ENCODE measurements at regions of chr12 and their contacts with region 1.

Region 1: DNA sequence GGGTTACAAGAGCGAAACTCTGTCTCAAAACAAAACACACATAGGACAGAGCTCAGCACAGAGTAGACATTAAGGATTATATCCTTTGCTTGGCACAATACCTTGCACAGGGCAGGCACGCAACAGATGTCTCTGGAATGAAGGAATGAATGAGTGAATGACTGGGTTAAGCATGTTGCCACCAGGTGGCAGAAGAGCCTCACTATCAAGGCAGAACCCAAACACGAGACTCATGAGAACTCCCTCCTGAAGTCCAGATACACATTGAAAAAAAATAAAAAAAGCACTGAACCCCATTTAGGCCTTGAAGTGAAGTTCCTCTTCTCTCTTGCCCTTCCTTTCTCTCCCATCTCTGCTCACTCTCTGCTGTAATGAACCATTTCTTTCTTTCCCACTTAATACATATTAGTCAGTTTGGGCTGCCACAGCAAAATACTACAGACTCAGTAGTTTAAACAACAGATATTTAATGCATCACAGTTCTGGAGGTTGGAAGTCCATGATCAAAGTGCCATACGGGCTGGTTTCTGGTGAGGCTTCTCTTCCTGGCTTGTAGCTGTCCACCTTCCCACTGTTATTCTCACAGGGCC is 26.6 kb upstream of the LTA4H start:
- DNase-seq: peak; percentile 83
- H3K4me3 Mint-ChIP-seq: no peak overlapping the region
- H3K27ac Mint-ChIP-seq: no peak overlapping the region
- H3K4me1 Mint-ChIP-seq: peaks cover 26% of the 10 kb centered on the region
- H3K27me3 Mint-ChIP-seq: no peaks in the 10 kb centered on the region

Region 2: GRCh38 chr12:96132819-96133218 is 70.9 kb after region 1 on chr12:
- CTCF ChIA-PET with region 1: no interaction called
- POLR2A ChIA-PET with region 1: no interaction called
- intact Hi-C with region 1: loop called (anchors 2 kb)
- DNase-seq: peak; percentile 31
- H3K4me3 Mint-ChIP-seq: no peak overlapping the region
- H3K27ac Mint-ChIP-seq: no peak overlapping the region
- H3K4me1 Mint-ChIP-seq: peaks cover 22% of the 10 kb centered on the region
- H3K27me3 Mint-ChIP-seq: peaks cover 6% of the 10 kb centered on the region

Region 3: DNA sequence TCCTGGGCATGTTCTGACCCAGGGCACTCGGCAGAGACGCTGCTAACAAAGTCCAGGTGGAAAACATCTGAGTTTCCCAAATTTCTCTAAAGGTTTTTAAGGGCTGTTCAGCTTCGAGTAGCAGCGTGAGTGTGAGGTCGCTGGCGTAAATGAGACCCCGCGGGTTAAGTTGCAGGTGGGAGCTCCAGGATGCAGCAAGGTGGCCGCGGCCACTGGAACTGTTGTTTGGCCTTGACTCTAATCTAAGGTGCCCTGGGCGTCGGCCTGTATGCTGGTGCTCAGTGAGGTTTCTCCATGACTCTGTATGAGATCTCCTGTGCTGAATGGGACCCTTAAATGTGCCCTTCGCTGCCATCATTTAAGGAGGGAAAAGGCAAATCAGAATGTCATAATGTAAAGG is 182.9 kb after region 1 on chr12:
- CTCF ChIA-PET with region 1: no interaction called
- POLR2A ChIA-PET with region 1: no interaction called
- intact Hi-C with region 1: no loop called
- DNase-seq: no peak
- H3K4me3 Mint-ChIP-seq: no peak overlapping the region
- H3K27ac Mint-ChIP-seq: no peak overlapping the region
- H3K4me1 Mint-ChIP-seq: peaks cover 55% of the 10 kb centered on the region
- H3K27me3 Mint-ChIP-seq: no peaks in the 10 kb centered on the region

Region 4: GRCh38 chr12:96501139-96501761 is 439.3 kb after region 1 on chr12:
- CTCF ChIA-PET with region 1: interaction called, 3 read pairs
- POLR2A ChIA-PET with region 1: no interaction called
- intact Hi-C with region 1: loop called (anchors 5 kb)
- DNase-seq: peak; percentile 56
- H3K4me3 Mint-ChIP-seq: no peak overlapping the region
- H3K27ac Mint-ChIP-seq: peak overlapping the region; percentile 84
- H3K4me1 Mint-ChIP-seq: peaks cover 39% of the 10 kb centered on the region
- H3K27me3 Mint-ChIP-seq: no peaks in the 10 kb centered on the region

Measured in activated CD4-positive, alpha-beta memory T cell treated with anti-CD3 and anti-CD28 coated beads for 36 hours (primary cell).